Naive thymus-derived CD4-positive, alpha-beta T cell (primary cell): ENCODE measurements at regions of chr9 and their contacts with region 1.

Region 1: GRCh38 chr9:128322404-128323211 is at the starts of genes COQ4 and TRUB2:
- DNase-seq: peak; percentile 80 to 95 (median 94)
- ATAC-seq: peak; percentile 95
- H3K4me3 ChIP-seq: peak within 1 kb of the TSS; percentile 98
- H3K4me3 Mint-ChIP-seq: peak within 1 kb of the TSS; percentile 82 to 99 (median 96)
- H3K27ac ChIP-seq: peak within 1 kb of the TSS; percentile 85
- H3K27ac Mint-ChIP-seq: peak within 1 kb of the TSS; percentile 95 to 99 (median 98)
- H3K4me1 ChIP-seq: peaks cover 10 to 13% of the 10 kb centered on the region in 2 donors
- H3K4me1 Mint-ChIP-seq: peaks cover 4 to 45% (median 29%) of the 10 kb centered on the region in 7 donors
- H3K27me3 ChIP-seq: no peaks in the 10 kb centered on the region
- H3K27me3 Mint-ChIP-seq: peaks cover 0 to 2% (median 0%) of the 10 kb centered on the region in 5 donors
- total RNA-seq, gene COQ4: 32.9 to 47.2 (median 42.4) TPM
- total RNA-seq, gene TRUB2: 11.5 to 27.2 (median 21.6) TPM

Region 2: DNA sequence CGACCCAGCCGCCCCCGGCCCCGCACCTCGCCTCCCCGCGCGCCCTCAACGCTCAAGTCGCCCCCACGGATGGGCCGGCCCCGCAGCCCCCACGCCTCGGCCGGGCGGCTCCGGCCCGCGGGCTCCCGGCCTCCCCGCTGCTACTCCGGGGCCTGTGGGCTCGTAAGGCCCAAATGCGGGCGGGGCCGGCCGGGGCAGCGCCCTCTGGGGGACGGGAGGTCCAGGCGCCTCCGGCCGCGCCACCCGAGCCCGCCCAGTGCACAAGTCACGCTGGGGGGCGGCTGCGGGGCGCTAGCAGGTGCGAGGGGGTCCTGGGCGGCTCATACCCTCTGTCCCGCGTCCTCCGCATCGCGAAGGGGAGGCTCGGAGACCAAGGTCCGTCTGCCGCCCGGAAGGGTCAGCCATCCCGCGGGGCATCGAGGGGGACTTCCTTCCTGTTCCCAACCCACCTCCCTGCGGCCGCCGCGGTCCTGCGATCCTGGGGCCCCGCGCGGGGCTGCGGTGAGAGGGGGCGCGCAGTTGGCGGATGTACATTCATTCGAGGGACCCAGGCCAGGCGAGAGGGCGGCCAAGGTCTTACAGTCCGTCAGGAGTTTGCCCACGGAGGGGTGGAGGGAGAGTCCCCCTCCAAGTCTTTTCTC is 131.1 kb before region 1 on chr9 and contains the start of gene CIZ1:
- CTCF ChIA-PET with region 1: no interaction called
- POLR2A ChIA-PET with region 1: no interaction called
- intact Hi-C with region 1: loop called (anchors 5 kb)
- DNase-seq: peak; percentile 51 to 86 (median 69)
- ATAC-seq: peak; percentile 95
- H3K4me3 ChIP-seq: peak within 1 kb of the TSS; percentile 76
- H3K4me3 Mint-ChIP-seq: peak within 1 kb of the TSS; percentile 92 to 99 (median 96)
- H3K27ac ChIP-seq: peak within 1 kb of the TSS; percentile 89
- H3K27ac Mint-ChIP-seq: peak within 1 kb of the TSS; percentile 84 to 93 (median 90)
- H3K4me1 ChIP-seq: peaks cover 12 to 16% of the 10 kb centered on the region in 2 donors
- H3K4me1 Mint-ChIP-seq: peaks cover 13 to 39% (median 31%) of the 10 kb centered on the region in 7 donors
- H3K27me3 ChIP-seq: no peaks in the 10 kb centered on the region
- H3K27me3 Mint-ChIP-seq: peaks cover 0 to 13% (median 0%) of the 10 kb centered on the region in 5 donors
- total RNA-seq, gene CIZ1: 110 to 163 (median 142) TPM

Region 3: DNA sequence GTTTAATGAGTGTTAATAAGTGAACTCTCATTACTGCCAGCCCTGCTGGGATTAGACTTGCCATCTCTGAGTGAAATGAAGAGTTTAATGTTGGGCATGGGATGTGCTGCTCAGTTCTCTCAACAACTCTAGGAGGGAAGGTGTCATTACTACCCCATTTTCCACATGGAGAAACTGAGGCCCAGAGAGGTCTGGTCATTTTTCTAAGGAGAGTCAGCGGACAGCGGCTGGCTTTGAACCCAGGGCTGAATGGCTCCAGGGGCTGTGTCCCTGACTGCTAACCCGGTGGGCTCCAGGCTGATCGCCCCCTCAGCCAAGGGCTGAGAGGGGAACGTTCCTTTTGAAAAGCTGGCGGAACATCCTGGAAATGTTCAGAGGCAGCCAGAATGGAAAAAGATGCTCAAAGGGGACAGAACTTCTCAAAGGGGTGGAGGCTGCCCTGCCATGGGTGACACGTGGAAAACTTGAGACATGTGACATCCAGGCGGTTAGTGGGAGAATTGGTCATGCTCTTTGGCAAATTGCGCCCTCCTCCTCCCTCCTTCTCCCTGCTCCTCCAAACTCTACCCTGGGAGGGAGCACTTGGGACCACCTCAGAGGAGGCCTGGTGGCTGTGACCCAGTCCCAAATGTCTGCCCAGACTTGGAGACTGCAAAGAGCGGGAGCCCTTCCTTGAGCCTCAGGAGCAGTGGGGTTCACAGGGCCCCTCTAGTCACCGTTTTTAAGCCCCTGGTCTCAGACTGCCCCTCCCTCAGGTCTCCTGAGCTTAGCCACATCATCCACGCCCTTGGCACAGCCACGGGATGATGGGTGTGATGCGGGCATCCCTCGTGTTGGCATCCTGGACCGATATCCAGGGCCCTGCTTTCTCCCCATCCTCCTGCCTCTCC is 90.7 kb before region 1 on chr9:
- CTCF ChIA-PET with region 1: no interaction called
- POLR2A ChIA-PET with region 1: no interaction called
- intact Hi-C with region 1: no loop called
- DNase-seq: no peak
- ATAC-seq: no peak
- H3K4me3 ChIP-seq: no peak overlapping the region
- H3K4me3 Mint-ChIP-seq: no peak overlapping the region
- H3K27ac ChIP-seq: no peak overlapping the region
- H3K27ac Mint-ChIP-seq: no peak overlapping the region
- H3K4me1 ChIP-seq: no peaks in the 10 kb centered on the region
- H3K4me1 Mint-ChIP-seq: no peaks in the 10 kb centered on the region
- H3K27me3 ChIP-seq: no peaks in the 10 kb centered on the region
- H3K27me3 Mint-ChIP-seq: peaks cover 0 to 5% (median 0%) of the 10 kb centered on the region in 5 donors

Region 4: DNA sequence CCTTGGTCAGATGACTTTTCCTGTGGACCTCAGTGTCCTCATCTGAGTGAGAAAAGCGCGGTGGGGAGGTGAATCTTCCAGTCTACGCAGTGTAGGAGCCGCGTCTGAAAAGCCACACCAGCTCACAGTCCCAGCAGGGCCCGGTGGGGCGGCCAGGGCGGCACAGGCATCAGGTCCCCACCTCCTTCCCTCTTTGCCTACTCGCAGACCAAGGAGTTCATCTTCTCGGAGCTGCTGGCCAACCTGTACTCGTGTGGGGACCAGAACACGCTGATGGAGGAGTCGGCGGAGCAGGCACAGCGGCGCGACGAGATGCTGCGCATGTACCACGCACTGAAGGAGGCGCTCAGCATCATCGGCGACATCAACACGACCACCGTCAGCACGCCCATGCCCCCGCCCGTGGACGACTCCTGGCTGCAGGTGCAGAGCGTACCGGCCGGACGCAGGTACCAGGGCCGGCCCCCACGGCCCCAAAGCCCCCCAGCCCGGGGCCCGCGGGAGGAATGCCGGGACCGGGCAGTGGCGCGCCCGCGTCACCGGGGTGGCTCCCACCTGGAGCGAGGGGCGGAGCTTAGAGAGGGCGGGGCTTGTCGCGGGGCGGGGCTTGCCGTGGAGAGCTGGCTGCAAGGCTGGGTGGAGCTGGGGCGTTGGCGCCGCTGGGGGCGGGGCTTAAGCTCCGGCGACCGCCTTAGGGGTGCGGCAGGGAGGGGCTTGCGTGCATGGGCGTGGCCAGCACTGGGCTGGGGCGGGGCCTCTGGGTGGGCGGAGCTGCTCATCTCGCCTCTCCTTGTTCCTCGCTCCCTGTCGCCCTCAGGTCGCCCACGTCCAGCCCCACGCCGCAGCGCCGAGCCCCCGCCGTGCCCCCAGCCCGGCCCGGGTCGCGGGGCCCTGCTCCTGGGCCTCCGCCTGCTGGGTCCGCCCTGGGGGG is 72.4 kb before region 1 on chr9:
- CTCF ChIA-PET with region 1: no interaction called
- POLR2A ChIA-PET with region 1: no interaction called
- intact Hi-C with region 1: loop called (anchors 1 kb)
- DNase-seq: peak; percentile 96 to 100 (median 98)
- ATAC-seq: peak; percentile 98
- H3K4me3 ChIP-seq: peak overlapping the region; percentile 83
- H3K4me3 Mint-ChIP-seq: peak overlapping the region; percentile 79 to 93 (median 88)
- H3K27ac ChIP-seq: peak overlapping the region; percentile 72
- H3K27ac Mint-ChIP-seq: peak overlapping the region; percentile 60 to 97 (median 95)
- H3K4me1 ChIP-seq: peaks cover 7 to 9% of the 10 kb centered on the region in 2 donors
- H3K4me1 Mint-ChIP-seq: peaks cover 7 to 28% (median 17%) of the 10 kb centered on the region in 7 donors
- H3K27me3 ChIP-seq: no peaks in the 10 kb centered on the region
- H3K27me3 Mint-ChIP-seq: peaks cover 0 to 39% (median 6%) of the 10 kb centered on the region in 5 donors

Region 5: GRCh38 chr9:128339771-128340690 is 17.4 kb after region 1 on chr9 and contains the start of gene SLC27A4:
- CTCF ChIA-PET with region 1: interaction called, 3 read pairs
- POLR2A ChIA-PET with region 1: interaction called, 5 read pairs
- intact Hi-C with region 1: loop called (anchors 1 kb)
- DNase-seq: peak; percentile 75 to 86 (median 82)
- ATAC-seq: peak; percentile 96
- H3K4me3 ChIP-seq: peak within 1 kb of the TSS; percentile 66
- H3K4me3 Mint-ChIP-seq: peak within 1 kb of the TSS; percentile 87 to 98 (median 95)
- H3K27ac ChIP-seq: peak within 1 kb of the TSS; percentile 69
- H3K27ac Mint-ChIP-seq: peak within 1 kb of the TSS; percentile 70 to 93 (median 90)
- H3K4me1 ChIP-seq: peaks cover 4 to 12% of the 10 kb centered on the region in 2 donors
- H3K4me1 Mint-ChIP-seq: peaks cover 6 to 11% (median 9%) of the 10 kb centered on the region in 7 donors
- H3K27me3 ChIP-seq: no peaks in the 10 kb centered on the region
- H3K27me3 Mint-ChIP-seq: no peaks in the 10 kb centered on the region
- total RNA-seq, gene SLC27A4: 6.4 to 20.1 (median 12.1) TPM

Region 6: DNA sequence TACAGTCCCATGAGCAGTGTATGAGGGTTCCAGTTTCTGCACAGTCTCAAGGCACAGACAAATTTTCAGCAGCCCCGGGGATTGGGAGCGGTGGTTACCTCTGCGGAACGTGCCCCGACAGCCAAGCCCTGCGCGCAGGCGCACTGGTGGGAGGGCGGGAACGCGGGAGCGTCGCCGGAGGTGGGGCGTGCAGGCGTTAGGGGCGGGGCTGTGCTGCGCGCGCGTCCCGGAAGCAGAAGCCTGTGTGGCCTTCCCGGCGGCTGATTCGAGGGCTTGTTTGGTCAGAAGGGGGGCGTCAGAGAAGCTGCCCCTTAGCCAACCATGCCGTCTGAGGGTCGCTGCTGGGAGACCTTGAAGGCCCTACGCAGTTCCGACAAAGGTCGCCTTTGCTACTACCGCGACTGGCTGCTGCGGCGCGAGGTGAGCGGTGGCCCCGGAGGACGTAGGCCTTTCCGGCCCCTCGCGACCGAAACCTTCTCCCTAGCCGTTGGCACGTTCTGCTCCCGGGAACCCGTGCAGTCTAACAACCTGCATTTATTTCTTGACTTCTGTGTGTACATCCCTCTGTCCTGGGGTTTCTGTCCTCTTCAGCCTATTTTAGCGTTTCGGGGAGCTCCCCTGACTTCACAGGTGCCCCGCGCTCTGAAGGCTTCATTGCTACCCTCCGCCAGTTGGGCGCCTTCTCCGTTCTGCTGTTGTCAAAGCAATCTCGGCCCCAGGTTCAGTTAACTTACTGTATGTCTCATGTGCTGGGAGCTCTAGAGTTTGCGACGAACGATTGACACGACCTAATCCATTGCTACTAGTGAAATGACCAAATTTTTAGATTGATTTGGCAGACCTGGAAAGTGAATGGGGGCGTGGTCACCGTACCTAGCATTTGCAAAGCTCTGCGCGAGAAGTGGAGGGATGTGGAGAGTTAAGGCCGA is 182.1 kb after region 1 on chr9 and contains the start of gene GLE1:
- CTCF ChIA-PET with region 1: no interaction called
- POLR2A ChIA-PET with region 1: interaction called, 4 read pairs
- intact Hi-C with region 1: loop called in 1 of 2 experiments (anchors 1 kb)
- DNase-seq: peak; percentile 93 to 99 (median 97)
- ATAC-seq: peak; percentile 98
- H3K4me3 ChIP-seq: peak within 1 kb of the TSS; percentile 97
- H3K4me3 Mint-ChIP-seq: peak within 1 kb of the TSS; percentile 92 to 100 (median 99)
- H3K27ac ChIP-seq: peak within 1 kb of the TSS; percentile 92
- H3K27ac Mint-ChIP-seq: peak within 1 kb of the TSS; percentile 82 to 100 (median 99)
- H3K4me1 ChIP-seq: peaks cover 8 to 11% of the 10 kb centered on the region in 2 donors
- H3K4me1 Mint-ChIP-seq: peaks cover 0 to 38% (median 34%) of the 10 kb centered on the region in 7 donors
- H3K27me3 ChIP-seq: no peaks in the 10 kb centered on the region
- H3K27me3 Mint-ChIP-seq: no peaks in the 10 kb centered on the region
- total RNA-seq, gene GLE1: 14.2 to 46.5 (median 30.5) TPM

Region 7: DNA sequence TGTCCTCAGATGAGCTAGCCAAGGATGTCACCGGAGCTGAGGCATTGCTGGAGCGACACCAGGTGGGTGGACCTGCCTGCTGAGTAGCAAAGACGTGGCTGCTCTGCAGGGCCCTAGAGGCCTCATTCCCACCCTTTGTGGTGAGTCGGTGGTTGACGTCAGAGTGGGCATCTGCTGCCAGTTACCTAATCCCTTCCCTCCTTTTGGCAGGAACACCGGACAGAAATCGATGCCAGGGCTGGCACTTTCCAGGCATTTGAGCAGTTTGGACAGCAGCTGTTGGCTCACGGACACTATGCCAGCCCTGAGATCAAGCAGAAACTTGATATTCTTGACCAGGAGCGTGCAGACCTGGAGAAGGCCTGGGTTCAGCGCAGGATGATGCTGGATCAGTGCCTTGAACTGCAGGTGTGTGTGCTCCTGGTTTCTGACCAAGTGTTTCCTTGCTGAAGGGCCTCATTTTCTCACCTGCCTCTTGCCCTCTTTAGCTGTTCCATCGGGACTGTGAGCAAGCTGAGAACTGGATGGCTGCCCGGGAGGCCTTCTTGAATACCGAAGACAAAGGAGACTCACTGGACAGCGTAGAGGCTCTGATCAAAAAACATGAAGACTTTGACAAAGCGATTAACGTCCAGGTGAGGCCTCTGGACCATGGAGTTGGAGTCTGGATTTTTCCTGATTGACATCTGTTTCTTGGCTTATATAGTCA is 285.2 kb after region 1 on chr9:
- CTCF ChIA-PET with region 1: no interaction called
- POLR2A ChIA-PET with region 1: no interaction called
- intact Hi-C with region 1: no loop called
- DNase-seq: no peak
- ATAC-seq: no peak
- H3K4me3 ChIP-seq: no peak overlapping the region
- H3K4me3 Mint-ChIP-seq: no peak overlapping the region
- H3K27ac ChIP-seq: no peak overlapping the region
- H3K27ac Mint-ChIP-seq: peak overlapping the region in 1 of 9 donors; percentile 18
- H3K4me1 ChIP-seq: no peaks in the 10 kb centered on the region
- H3K4me1 Mint-ChIP-seq: no peaks in the 10 kb centered on the region
- H3K27me3 ChIP-seq: no peaks in the 10 kb centered on the region
- H3K27me3 Mint-ChIP-seq: no peaks in the 10 kb centered on the region

Region 8: DNA sequence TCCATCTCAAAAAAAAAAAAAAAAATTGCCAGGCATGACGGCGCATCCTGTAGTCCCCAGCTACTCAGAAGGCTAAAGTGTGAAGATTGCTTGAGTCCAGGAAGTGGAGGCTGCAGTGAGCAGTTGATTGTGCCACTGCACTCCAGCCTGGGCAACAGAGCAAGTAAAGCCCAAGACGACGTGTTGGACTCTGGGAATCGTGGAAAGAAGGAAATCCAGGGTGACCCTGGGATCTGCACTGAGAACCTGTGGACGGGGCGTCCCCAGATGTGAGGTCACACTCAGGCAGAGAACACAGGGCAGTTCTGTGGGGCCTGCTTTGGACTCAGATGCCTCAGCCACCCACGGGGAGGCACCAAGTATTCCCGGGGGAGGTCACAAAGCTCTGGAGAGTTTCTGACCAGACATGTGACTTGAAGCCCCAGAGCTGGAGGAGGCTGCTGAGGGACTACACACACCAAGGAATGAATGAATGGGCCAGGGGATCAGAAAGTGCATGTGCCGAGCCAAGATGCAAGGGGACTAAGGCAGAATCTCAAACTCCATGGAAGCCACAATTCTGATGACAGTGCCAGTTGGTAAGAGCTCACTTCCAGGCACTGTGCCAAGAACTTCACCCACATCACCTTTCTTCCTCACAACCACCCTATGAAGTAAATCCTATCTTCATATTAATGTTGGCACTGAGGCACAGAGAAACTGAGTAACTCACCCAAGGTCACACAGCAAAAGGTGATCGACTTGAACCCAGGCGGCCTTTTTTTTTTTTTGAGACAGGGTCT is 321.1 kb after region 1 on chr9:
- CTCF ChIA-PET with region 1: no interaction called
- POLR2A ChIA-PET with region 1: no interaction called
- intact Hi-C with region 1: no loop called
- DNase-seq: no peak
- ATAC-seq: no peak
- H3K4me3 ChIP-seq: no peak overlapping the region
- H3K4me3 Mint-ChIP-seq: no peak overlapping the region
- H3K27ac ChIP-seq: no peak overlapping the region
- H3K27ac Mint-ChIP-seq: peak overlapping the region in 1 of 9 donors; percentile 60
- H3K4me1 ChIP-seq: no peaks in the 10 kb centered on the region
- H3K4me1 Mint-ChIP-seq: peaks cover 0 to 3% (median 0%) of the 10 kb centered on the region in 7 donors
- H3K27me3 ChIP-seq: no peaks in the 10 kb centered on the region
- H3K27me3 Mint-ChIP-seq: no peaks in the 10 kb centered on the region

Region 9: GRCh38 chr9:128786681-128787601 is 464.3 kb after region 1 on chr9 and contains the start of gene TBC1D13:
- CTCF ChIA-PET with region 1: no interaction called
- POLR2A ChIA-PET with region 1: no interaction called
- intact Hi-C with region 1: loop called in 1 of 2 experiments (anchors 1 kb)
- DNase-seq: peak; percentile 88 to 93 (median 92)
- ATAC-seq: peak; percentile 99
- H3K4me3 ChIP-seq: peak within 1 kb of the TSS; percentile 90
- H3K4me3 Mint-ChIP-seq: peak within 1 kb of the TSS; percentile 80 to 98 (median 92)
- H3K27ac ChIP-seq: peak within 1 kb of the TSS; percentile 82
- H3K27ac Mint-ChIP-seq: peak within 1 kb of the TSS; percentile 87 to 98 (median 95)
- H3K4me1 ChIP-seq: peaks cover 13% of the 10 kb centered on the region in 2 donors
- H3K4me1 Mint-ChIP-seq: peaks cover 6 to 29% (median 23%) of the 10 kb centered on the region in 7 donors
- H3K27me3 ChIP-seq: no peaks in the 10 kb centered on the region
- H3K27me3 Mint-ChIP-seq: no peaks in the 10 kb centered on the region
- total RNA-seq, gene TBC1D13: 21.0 to 35.2 (median 24.9) TPM